Heart left ventricle (tissue), 16 donors: ENCODE measurements at regions of chr10 and their contacts with region 1.

Region 1: GRCh38 chr10:26839966-26840627 is 20.7 kb downstream of the ABI1 start:
- DNase-seq: no peak
- ATAC-seq: no peak
- H3K4me3 ChIP-seq: no peak overlapping the region
- H3K27ac ChIP-seq: no peak overlapping the region
- H3K4me1 ChIP-seq: peaks cover 0 to 39% (median 18%) of the 10 kb centered on the region in 12 donors
- H3K27me3 ChIP-seq: no peaks in the 10 kb centered on the region
- CTCF ChIP-seq: no peak
- POLR2A ChIP-seq: no peak

Region 2: DNA sequence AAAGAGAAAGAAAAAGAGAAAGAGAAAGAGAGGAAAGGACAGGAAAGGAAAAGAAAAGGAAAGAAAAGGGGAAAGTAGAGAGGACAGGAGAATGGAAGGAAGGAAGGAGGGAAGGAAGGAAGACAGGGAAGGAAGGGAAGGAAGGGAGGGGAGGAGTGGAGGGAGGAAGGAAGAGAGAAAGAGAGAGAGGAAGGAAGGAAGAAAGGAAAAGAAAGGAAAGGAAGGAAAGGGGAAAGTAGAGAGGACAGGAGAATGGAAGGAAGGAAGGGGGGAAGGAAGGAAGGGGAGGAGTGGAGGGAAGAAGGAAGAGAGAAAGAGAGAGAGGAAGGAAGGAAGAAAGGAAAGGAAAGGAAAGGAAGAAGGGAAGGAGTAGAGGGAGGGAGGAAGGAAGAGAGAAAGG is 498.4 kb before region 1 on chr10:
- intact Hi-C with region 1: no loop called
- DNase-seq: no peak
- ATAC-seq: no peak
- H3K4me3 ChIP-seq: no peak overlapping the region
- H3K27ac ChIP-seq: no peak overlapping the region
- H3K4me1 ChIP-seq: no peaks in the 10 kb centered on the region
- H3K27me3 ChIP-seq: peaks cover 0 to 2% (median 0%) of the 10 kb centered on the region in 9 donors
- CTCF ChIP-seq: no peak
- POLR2A ChIP-seq: no peak

Region 3: GRCh38 chr10:26612151-26612915 is 227.8 kb before region 1 on chr10:
- intact Hi-C with region 1: no loop called
- DNase-seq: no peak
- ATAC-seq: no peak
- H3K4me3 ChIP-seq: no peak overlapping the region
- H3K27ac ChIP-seq: no peak overlapping the region
- H3K4me1 ChIP-seq: no peaks in the 10 kb centered on the region
- H3K27me3 ChIP-seq: peaks cover 0 to 4% (median 0%) of the 10 kb centered on the region in 9 donors
- CTCF ChIP-seq: no peak
- POLR2A ChIP-seq: no peak

Region 4: GRCh38 chr10:26799342-26799741 is 40.8 kb before region 1 on chr10:
- intact Hi-C with region 1: loop called in 1 of 10 experiments (anchors 10 kb)
- DNase-seq: no peak
- ATAC-seq: no peak
- H3K4me3 ChIP-seq: no peak overlapping the region
- H3K27ac ChIP-seq: no peak overlapping the region
- H3K4me1 ChIP-seq: peaks cover 0 to 42% (median 31%) of the 10 kb centered on the region in 12 donors
- H3K27me3 ChIP-seq: no peaks in the 10 kb centered on the region
- CTCF ChIP-seq: no peak
- POLR2A ChIP-seq: no peak